Activated CD4-positive, alpha-beta memory T cell treated with anti-CD3 and anti-CD28 coated beads, Interleukin-2, amount 10 ng/mL, durations not matched to agents 7 days and 5 days (primary cell): ENCODE measurements at regions of chr22 and their contacts with region 1.

Region 1: GRCh38 chr22:37817705-37818408 is 5.3 kb upstream of the GALR3 start:
- DNase-seq: peak; percentile 84
- H3K4me3 Mint-ChIP-seq: no peak overlapping the region
- H3K27ac Mint-ChIP-seq: no peak overlapping the region
- H3K4me1 Mint-ChIP-seq: peaks cover 12% of the 10 kb centered on the region
- H3K27me3 Mint-ChIP-seq: peaks cover 25% of the 10 kb centered on the region

Region 2: GRCh38 chr22:37807410-37808293 is 10.2 kb before region 1 on chr22 and contains the start of gene GCAT:
- CTCF ChIA-PET with region 1: interaction called, 49 read pairs
- POLR2A ChIA-PET with region 1: interaction called, 11 read pairs
- DNase-seq: peak; percentile 95
- H3K4me3 Mint-ChIP-seq: peak within 1 kb of the TSS; percentile 78
- H3K27ac Mint-ChIP-seq: no peak within 1 kb of the TSS
- H3K4me1 Mint-ChIP-seq: peaks cover 44% of the 10 kb centered on the region
- H3K27me3 Mint-ChIP-seq: peaks cover 40% of the 10 kb centered on the region
- total RNA-seq, gene GCAT: 13.2 to 14.1 TPM

Region 3: DNA sequence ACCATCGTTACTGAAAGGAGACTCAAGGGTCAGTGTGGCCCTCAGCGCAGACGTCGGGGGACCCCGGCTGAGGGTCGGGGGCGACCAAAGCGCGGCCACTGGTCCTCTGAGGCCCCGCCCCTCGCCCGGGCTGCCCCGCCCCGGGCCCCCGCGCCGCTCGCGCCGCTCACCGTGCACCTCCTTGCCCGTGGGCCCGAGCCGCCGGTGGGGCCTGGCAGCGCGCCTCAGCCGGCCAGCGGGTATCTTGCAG is 25.8 kb after region 1 on chr22:
- CTCF ChIA-PET with region 1: interaction called, 32 read pairs
- POLR2A ChIA-PET with region 1: interaction called, 4 read pairs
- DNase-seq: peak; percentile 65
- H3K4me3 Mint-ChIP-seq: peak overlapping the region; percentile 85
- H3K27ac Mint-ChIP-seq: peak overlapping the region; percentile 85
- H3K4me1 Mint-ChIP-seq: peaks cover 33% of the 10 kb centered on the region
- H3K27me3 Mint-ChIP-seq: no peaks in the 10 kb centered on the region

Region 4: DNA sequence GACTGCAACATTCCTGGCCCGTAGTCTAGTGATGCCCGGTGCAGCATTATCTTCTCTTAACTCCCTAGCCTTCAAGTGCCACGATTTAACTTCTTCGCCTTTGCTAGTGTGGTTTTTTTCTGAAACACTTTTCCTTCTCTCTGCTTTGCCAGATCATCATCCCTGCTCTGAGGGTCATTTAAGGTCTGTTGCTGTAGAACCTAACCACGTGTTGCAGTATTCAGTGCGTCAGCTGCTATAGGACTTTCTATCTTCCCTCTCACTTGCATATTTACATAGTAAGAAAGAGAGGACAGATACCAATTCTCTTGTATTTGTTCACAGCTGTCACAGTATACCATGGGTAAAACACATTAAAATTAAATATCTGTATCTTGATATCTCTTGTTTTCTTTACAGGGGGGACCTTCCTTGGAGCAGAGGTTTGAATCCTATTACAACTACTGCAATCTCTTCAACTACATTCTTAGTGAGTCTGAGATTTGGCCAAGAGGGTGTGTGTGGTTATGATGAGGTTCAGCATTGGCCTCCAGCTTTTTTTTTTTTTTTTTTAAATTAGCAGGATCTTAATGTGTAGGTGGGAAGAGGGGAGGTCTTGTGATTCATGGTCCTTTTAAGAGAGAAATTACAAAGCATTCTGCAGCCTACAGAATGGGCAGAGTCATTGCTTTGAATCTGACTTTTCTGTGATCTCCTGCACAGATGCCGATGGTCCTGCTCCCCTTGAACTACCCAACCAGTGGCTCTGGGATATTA is 44.9 kb after region 1 on chr22:
- CTCF ChIA-PET with region 1: interaction called, 141 read pairs
- POLR2A ChIA-PET with region 1: interaction called, 3 read pairs
- DNase-seq: no peak
- H3K4me3 Mint-ChIP-seq: no peak overlapping the region
- H3K27ac Mint-ChIP-seq: no peak overlapping the region
- H3K4me1 Mint-ChIP-seq: peaks cover 2% of the 10 kb centered on the region
- H3K27me3 Mint-ChIP-seq: no peaks in the 10 kb centered on the region

Region 5: GRCh38 chr22:37953437-37954179 is 135.8 kb after region 1 on chr22 and contains the starts of genes C22orf23 and POLR2F:
- CTCF ChIA-PET with region 1: interaction called, 19 read pairs
- POLR2A ChIA-PET with region 1: no interaction called
- DNase-seq: peak; percentile 97
- H3K4me3 Mint-ChIP-seq: peak within 1 kb of the TSS; percentile 99
- H3K27ac Mint-ChIP-seq: peak within 1 kb of the TSS; percentile 82
- H3K4me1 Mint-ChIP-seq: peaks cover 36% of the 10 kb centered on the region
- H3K27me3 Mint-ChIP-seq: peaks cover 16% of the 10 kb centered on the region
- total RNA-seq, gene C22orf23: not detected
- total RNA-seq, gene POLR2F: 50.1 to 56.4 TPM

Region 6: DNA sequence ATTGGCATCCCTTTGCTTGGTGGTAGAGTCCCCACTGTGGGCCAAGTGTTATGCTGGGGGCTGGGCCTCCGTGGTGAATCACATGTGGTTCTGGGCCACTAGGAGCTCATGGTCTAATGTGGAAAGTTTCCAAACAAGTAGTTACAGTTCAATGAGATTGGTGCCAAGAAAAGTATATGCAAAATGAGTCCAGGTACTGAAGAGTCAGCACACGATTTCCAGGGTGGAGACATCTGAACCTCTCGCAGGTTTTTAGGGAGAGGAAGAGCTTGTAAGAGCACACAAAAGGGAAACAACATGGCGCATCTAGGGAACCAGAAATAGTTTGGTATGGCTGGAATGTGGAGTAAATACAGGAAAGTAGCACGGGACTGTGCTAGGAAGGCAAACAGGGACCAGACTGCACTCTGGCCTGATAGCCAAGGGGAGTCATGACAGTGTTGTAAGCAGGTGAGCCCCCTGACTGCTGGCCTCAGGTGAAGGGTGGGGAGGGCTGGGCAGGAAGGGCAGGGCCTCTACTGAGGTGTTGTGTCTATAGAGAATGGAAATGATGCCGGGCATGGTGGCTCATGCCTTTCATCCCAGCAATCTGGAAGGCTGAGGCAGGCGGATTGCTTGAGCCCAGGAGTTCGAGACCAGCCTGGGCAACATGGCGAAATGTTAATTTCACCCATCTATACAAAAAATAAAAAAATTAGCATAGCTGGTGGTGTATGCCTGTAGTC is 148.2 kb after region 1 on chr22:
- CTCF ChIA-PET with region 1: interaction called, 27 read pairs
- POLR2A ChIA-PET with region 1: no interaction called
- DNase-seq: no peak
- H3K4me3 Mint-ChIP-seq: no peak overlapping the region
- H3K27ac Mint-ChIP-seq: no peak overlapping the region
- H3K4me1 Mint-ChIP-seq: peaks cover 2% of the 10 kb centered on the region
- H3K27me3 Mint-ChIP-seq: no peaks in the 10 kb centered on the region

Region 7: GRCh38 chr22:38030311-38031133 is 212.7 kb after region 1 on chr22:
- CTCF ChIA-PET with region 1: no interaction called
- POLR2A ChIA-PET with region 1: no interaction called
- DNase-seq: no peak
- H3K4me3 Mint-ChIP-seq: no peak overlapping the region
- H3K27ac Mint-ChIP-seq: no peak overlapping the region
- H3K4me1 Mint-ChIP-seq: no peaks in the 10 kb centered on the region
- H3K27me3 Mint-ChIP-seq: no peaks in the 10 kb centered on the region